Activated naive CD8-positive, alpha-beta T cell treated with anti-CD3 and anti-CD28 coated beads, Interleukin-2, amount 10 ng/mL, durations not matched to agents 7 days and 5 days (primary cell): ENCODE measurements at regions of chr19 and their contacts with region 1.

Region 1: DNA sequence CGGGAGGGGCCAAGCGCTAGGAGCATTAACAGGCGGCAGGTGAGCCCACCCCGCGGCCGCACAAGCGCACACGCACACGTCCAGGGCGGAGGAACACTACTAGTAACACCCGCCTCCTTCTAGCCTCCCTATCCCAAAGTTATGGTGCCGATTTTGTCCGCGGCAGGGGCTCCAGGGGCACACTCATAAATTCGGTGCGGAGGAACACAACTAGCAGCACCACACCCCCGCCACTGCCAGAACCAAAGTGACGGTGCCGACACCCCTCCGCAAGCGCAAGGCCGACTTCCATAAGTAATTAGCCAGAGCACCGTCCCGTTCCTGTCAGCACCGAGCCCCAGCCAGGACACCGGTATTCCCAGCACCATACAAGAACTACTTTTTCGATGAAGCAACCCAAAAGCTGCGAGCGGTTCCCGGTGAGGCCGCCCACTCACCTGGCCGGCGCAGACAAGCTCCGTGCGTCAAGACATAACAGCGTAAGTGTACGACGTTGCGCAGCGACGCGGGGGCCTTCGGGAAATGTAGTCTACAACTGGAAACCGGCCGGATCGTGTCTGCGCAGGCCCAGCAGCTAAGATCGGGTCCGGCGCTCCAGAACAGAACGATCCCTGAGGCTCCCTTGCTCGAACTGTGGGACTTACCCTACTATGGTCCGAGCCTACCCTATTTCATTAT is at the starts of genes ZNF540 and ZNF571:
- DNase-seq: peak; percentile 86
- ATAC-seq: peak; percentile 99
- H3K4me3 Mint-ChIP-seq: peak within 1 kb of the TSS; percentile 92
- H3K27ac Mint-ChIP-seq: peak within 1 kb of the TSS; percentile 96
- H3K4me1 Mint-ChIP-seq: peaks cover 14% of the 10 kb centered on the region
- H3K27me3 Mint-ChIP-seq: no peaks in the 10 kb centered on the region
- total RNA-seq, gene ZNF540: 7.7 to 8.2 TPM
- total RNA-seq, gene ZNF571: 5.5 to 5.9 TPM

Region 2: GRCh38 chr19:37466798-37467607 is 127.4 kb before region 1 on chr19 and contains the start of gene ZNF569:
- POLR2A ChIA-PET with region 1: interaction called, 14 read pairs
- DNase-seq: peak; percentile 87
- ATAC-seq: peak; percentile 68
- H3K4me3 Mint-ChIP-seq: peak within 1 kb of the TSS; percentile 96
- H3K27ac Mint-ChIP-seq: peak within 1 kb of the TSS; percentile 89
- H3K4me1 Mint-ChIP-seq: peaks cover 20% of the 10 kb centered on the region
- H3K27me3 Mint-ChIP-seq: no peaks in the 10 kb centered on the region
- total RNA-seq, gene ZNF569: 12.8 to 12.9 TPM

Region 3: DNA sequence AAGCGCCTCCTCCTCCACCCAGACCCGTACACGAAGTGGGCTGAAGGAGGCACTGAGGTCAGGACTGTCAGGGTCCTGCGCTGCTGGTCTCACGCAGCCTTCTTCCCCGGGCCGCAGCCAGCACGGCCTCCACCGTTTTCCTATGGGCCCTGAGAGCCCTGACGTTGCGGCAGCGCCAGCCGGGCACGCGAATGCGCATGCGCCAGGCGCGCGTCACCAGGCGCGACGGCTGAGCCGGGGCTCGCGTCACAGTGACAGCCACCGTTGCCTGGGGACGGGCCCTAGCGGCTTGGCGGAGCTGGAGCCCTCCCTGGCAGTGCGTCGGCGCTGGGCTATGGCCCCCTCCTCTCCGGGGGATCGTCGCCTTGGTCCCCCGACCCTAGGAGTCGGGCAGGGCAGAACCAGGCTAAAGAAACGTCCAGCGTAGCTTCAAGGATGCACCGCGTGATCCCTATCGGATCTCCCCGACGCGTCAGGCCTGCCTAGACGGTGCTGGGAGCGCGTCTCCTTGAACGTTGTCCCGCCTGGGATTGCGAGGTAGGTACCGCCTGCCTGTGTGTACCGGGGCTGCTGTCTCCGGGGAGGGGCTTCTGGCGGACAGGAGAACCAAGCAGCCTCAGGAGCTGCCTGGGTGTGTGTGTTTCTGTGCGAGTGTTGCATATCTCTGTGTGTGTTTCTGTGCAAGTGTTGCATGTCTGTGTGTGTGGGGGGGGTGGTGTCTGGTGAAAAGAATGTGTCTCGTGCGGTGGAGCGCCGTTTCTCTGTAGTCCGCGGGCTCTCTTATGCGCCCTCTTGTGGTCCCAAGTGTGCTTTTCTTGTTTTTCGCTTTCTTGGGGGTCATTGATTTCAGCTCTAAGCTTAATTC is 43.1 kb before region 1 on chr19:
- POLR2A ChIA-PET with region 1: interaction called, 10 read pairs
- DNase-seq: peak; percentile 90
- ATAC-seq: peak; percentile 88
- H3K4me3 Mint-ChIP-seq: peak overlapping the region; percentile 99
- H3K27ac Mint-ChIP-seq: peak overlapping the region; percentile 96
- H3K4me1 Mint-ChIP-seq: no peaks in the 10 kb centered on the region
- H3K27me3 Mint-ChIP-seq: no peaks in the 10 kb centered on the region

Region 4: GRCh38 chr19:37655689-37656371 is 61.4 kb after region 1 on chr19:
- POLR2A ChIA-PET with region 1: interaction called, 12 read pairs
- DNase-seq: peak; percentile 92
- ATAC-seq: peak; percentile 75
- H3K4me3 Mint-ChIP-seq: peak overlapping the region; percentile 80
- H3K27ac Mint-ChIP-seq: peak overlapping the region; percentile 99
- H3K4me1 Mint-ChIP-seq: peaks cover 18% of the 10 kb centered on the region
- H3K27me3 Mint-ChIP-seq: no peaks in the 10 kb centered on the region

Region 5: GRCh38 chr19:37779127-37780005 is 184.9 kb after region 1 on chr19 and contains the start of gene ZNF573:
- POLR2A ChIA-PET with region 1: interaction called, 14 read pairs
- DNase-seq: peak; percentile 82
- ATAC-seq: peak; percentile 89
- H3K4me3 Mint-ChIP-seq: peak within 1 kb of the TSS; percentile 89
- H3K27ac Mint-ChIP-seq: peak within 1 kb of the TSS; percentile 93
- H3K4me1 Mint-ChIP-seq: peaks cover 11% of the 10 kb centered on the region
- H3K27me3 Mint-ChIP-seq: no peaks in the 10 kb centered on the region
- total RNA-seq, gene ZNF573: 13.9 to 14.0 TPM